Right ventricle myocardium superior (tissue), 1 donor: ENCODE measurements at regions of chr10 and their contacts with region 1.

Region 1: DNA sequence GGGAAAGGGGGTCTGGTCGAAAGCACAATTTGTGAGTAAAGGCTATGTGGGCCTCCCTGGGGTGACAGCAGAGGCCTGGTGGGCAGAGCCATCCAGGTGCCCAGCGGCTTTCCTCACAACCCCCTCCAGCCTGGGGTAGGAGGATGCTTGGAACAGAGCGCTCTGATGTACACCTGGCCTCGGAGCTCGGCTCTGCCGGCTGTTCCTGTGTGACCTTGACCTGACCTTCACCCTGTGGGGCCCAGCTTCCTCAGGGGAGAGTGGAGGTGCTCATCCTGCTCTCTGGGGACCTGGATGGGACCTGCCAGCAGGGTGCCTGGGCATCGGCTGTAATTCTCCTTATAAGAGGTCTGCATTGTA is 28.9 kb downstream of the RET start:
- DNase-seq: no peak
- ATAC-seq: no peak

Region 2: GRCh38 chr10:42753126-42753506 is 352.6 kb before region 1 on chr10:
- intact Hi-C with region 1: loop called (anchors 5 kb)
- DNase-seq: peak; percentile 87
- ATAC-seq: peak; percentile 92

Region 3: GRCh38 chr10:42850911-42851310 is 254.9 kb before region 1 on chr10:
- intact Hi-C with region 1: no loop called
- DNase-seq: no peak
- ATAC-seq: no peak

Region 4: DNA sequence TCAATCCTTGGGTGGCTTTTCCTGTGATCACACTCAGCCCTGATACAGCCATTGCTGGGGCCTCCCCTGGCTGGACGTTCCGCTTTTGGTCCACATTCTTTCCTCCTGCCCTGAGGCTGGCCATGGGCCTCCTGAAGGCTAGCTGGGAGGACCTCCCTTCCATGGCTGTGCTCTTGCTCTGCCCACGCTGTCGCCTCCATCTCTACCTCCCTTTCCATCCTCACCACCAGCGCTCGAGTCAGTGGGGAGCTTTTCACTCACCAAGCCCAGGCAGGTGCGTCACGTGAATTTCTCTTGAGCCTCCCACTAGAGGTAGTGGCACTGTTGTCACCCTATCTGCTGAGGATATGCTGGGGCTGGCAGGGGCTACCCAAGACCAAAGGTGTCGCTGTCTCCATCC is 237.2 kb before region 1 on chr10:
- intact Hi-C with region 1: loop called (anchors 2 kb)
- DNase-seq: no peak
- ATAC-seq: no peak

Region 5: GRCh38 chr10:43048574-43049339 is 57.0 kb before region 1 on chr10:
- intact Hi-C with region 1: no loop called
- DNase-seq: no peak
- ATAC-seq: no peak